OCI-LY7 (cell line): ENCODE measurements at regions of chr1 and their contacts with region 1.

Region 1: GRCh38 chr1:185156854-185157598 is at the starts of genes SWT1 and TRMT1L:
- DNase-seq: peak; percentile 97
- H3K4me3 ChIP-seq: peak within 1 kb of the TSS; percentile 89
- H3K27ac ChIP-seq: peak within 1 kb of the TSS; percentile 64
- H3K4me1 ChIP-seq: peaks cover 21% of the 10 kb centered on the region
- CTCF ChIP-seq: no peak
- total RNA-seq, gene SWT1: 2.1 and 2.3 TPM in 2 replicates
- total RNA-seq, gene TRMT1L: 10.8 and 15.0 TPM in 2 replicates

Region 2: GRCh38 chr1:184754476-184755225 is 402.4 kb before region 1 on chr1 and contains the start of gene EDEM3:
- CTCF ChIA-PET with region 1: no interaction called
- POLR2A ChIA-PET with region 1: interaction called, 6 read pairs
- intact Hi-C with region 1: loop called (anchors 5 kb)
- DNase-seq: peak; percentile 98
- H3K4me3 ChIP-seq: peak within 1 kb of the TSS; percentile 81
- H3K27ac ChIP-seq: peak within 1 kb of the TSS; percentile 43
- H3K4me1 ChIP-seq: peaks cover 23% of the 10 kb centered on the region
- CTCF ChIP-seq: no peak
- total RNA-seq, gene EDEM3: 15.7 and 19.5 TPM in 2 replicates

Region 3: DNA sequence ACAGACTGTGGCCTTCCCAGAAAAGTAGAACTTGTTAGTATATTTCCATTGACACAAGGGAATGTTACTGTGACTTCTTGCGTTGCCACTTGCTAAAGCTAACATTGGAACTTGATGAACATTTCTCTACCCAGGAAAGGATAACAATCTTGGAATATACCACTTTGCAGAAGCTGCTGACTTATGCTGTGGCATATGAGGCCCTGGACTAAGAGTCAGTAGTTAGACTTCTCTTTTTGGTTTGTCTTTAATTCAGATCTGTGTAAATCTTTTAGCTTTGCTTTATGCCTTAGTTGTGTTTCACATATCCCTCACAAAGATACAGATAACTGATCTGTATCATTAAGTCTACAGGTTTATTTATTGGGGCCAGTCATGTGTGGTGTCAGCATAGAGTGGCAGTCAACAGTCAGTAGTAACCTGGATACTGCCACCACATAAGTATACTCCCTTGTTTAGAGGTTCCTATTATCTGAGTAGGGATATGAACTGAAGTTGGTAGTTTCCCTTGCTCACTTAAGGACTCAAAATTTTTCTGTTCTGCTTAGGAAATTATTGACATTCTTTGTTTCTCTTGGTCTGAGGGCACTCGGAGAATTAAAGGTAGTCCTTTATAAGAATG is 97.0 kb before region 1 on chr1:
- CTCF ChIA-PET with region 1: no interaction called
- POLR2A ChIA-PET with region 1: no interaction called
- intact Hi-C with region 1: no loop called
- DNase-seq: no peak
- H3K4me3 ChIP-seq: no peak overlapping the region
- H3K27ac ChIP-seq: no peak overlapping the region
- H3K4me1 ChIP-seq: peaks cover 5% of the 10 kb centered on the region
- CTCF ChIP-seq: no peak

Region 4: DNA sequence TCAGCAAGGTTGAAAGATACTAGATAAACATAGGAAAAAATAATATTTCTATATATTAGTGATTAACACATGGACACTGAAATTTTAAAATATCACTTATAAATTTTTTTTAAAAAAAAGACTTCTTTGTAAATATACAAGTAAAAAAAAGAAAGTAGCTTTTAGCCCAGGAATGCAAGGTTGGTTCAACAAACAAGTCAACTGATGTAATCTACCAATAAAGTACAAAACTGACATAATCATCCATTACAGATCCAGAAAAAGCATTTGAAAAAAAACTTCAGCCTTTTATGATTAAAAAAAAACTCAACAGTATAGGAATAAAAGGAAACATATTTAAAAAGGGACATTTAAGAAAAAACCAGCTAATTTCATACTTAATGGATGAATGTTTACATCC is 48.7 kb before region 1 on chr1:
- CTCF ChIA-PET with region 1: no interaction called
- POLR2A ChIA-PET with region 1: no interaction called
- intact Hi-C with region 1: no loop called
- DNase-seq: peak; percentile 4
- H3K4me3 ChIP-seq: no peak overlapping the region
- H3K27ac ChIP-seq: no peak overlapping the region
- H3K4me1 ChIP-seq: no peaks in the 10 kb centered on the region
- CTCF ChIP-seq: no peak

Region 5: DNA sequence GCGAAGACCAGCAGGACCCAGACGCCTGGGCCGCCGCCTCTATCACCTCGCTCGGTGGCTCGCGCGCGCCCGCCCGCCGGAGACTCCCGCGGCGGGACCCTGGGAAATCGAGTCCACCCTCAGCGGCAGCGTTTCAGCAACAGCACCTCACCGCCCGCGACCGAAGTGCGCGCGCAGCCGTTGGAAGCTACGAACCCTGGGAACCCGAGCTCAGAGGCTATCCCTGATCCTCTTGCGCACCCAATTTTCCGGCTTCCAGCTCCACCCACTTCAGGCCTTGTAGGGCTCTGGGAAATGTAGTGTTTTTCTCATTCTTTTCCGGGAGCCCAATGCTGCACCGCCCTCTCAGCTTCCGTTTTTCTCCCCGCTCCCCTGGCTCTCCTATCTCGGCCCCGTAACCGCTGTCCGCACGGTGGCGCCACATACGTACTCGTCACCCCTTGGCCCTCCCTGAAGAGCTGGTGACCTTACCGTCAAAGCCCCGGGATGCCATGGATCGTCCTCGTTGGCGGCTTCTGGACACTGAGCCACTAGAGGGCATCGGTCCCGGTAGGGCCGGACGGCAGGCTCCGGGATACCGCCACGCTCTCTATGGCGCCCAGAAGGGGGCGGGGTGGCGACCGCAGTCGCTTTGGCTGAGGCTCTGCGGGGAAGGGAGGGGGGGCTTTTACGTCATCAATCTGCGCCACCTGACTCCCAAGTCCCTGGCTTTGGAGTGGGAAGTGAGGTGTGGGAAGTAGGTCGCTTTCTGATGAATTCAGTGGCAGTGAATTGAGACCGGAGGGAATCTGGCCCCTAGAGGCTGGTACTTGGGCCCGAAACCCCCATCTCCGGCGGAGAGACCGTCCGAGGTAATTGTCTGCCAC is 1218.3 kb after region 1 on chr1 and contains the starts of genes ODR4 and TPR:
- CTCF ChIA-PET with region 1: no interaction called
- POLR2A ChIA-PET with region 1: no interaction called
- intact Hi-C with region 1: loop called (anchors 5 kb)
- DNase-seq: peak; percentile 97
- H3K4me3 ChIP-seq: peak within 1 kb of the TSS; percentile 77
- H3K27ac ChIP-seq: peak within 1 kb of the TSS; percentile 79
- H3K4me1 ChIP-seq: peaks cover 20% of the 10 kb centered on the region
- CTCF ChIP-seq: peak; percentile 96
- total RNA-seq, gene ODR4: 9.2 and 12.0 TPM in 2 replicates
- total RNA-seq, gene TPR: 81.8 and 92.1 TPM in 2 replicates